Natural killer cell (primary cell): ENCODE measurements at regions of chr21 and their contacts with region 1.

Region 1: GRCh38 chr21:32597205-32597604 is 11.9 kb upstream of the TCP10L start:
- DNase-seq: no peak
- ATAC-seq: no peak
- H3K4me3 ChIP-seq: no peak overlapping the region
- H3K4me3 Mint-ChIP-seq: no peak overlapping the region
- H3K27ac ChIP-seq: no peak overlapping the region
- H3K27ac Mint-ChIP-seq: no peak overlapping the region
- H3K4me1 ChIP-seq: no peaks in the 10 kb centered on the region
- H3K4me1 Mint-ChIP-seq: no peaks in the 10 kb centered on the region
- H3K27me3 ChIP-seq: no peaks in the 10 kb centered on the region
- H3K27me3 Mint-ChIP-seq: no peaks in the 10 kb centered on the region
- CTCF ChIP-seq: no peak

Region 2: GRCh38 chr21:30625449-30626165 is 1971.6 kb before region 1 on chr21:
- intact Hi-C with region 1: no loop called
- DNase-seq: no peak
- ATAC-seq: no peak
- H3K4me3 ChIP-seq: no peak overlapping the region
- H3K4me3 Mint-ChIP-seq: no peak overlapping the region
- H3K27ac ChIP-seq: no peak overlapping the region
- H3K27ac Mint-ChIP-seq: no peak overlapping the region
- H3K4me1 ChIP-seq: no peaks in the 10 kb centered on the region
- H3K4me1 Mint-ChIP-seq: no peaks in the 10 kb centered on the region
- H3K27me3 ChIP-seq: no peaks in the 10 kb centered on the region
- H3K27me3 Mint-ChIP-seq: no peaks in the 10 kb centered on the region
- CTCF ChIP-seq: no peak

Region 3: GRCh38 chr21:32392880-32393676 is 204.1 kb before region 1 on chr21 and contains the start of gene URB1:
- intact Hi-C with region 1: loop called (anchors 2 kb)
- DNase-seq: peak; percentile 94 to 97
- ATAC-seq: peak; percentile 98 to 99 (median 98)
- H3K4me3 ChIP-seq: peak within 1 kb of the TSS; percentile 88
- H3K4me3 Mint-ChIP-seq: peak within 1 kb of the TSS; percentile 84
- H3K27ac ChIP-seq: peak within 1 kb of the TSS; percentile 91
- H3K27ac Mint-ChIP-seq: peak within 1 kb of the TSS; percentile 83 to 86
- H3K4me1 ChIP-seq: peaks cover 17% of the 10 kb centered on the region
- H3K4me1 Mint-ChIP-seq: peaks cover 37 to 38% of the 10 kb centered on the region in 2 donors
- H3K27me3 ChIP-seq: no peaks in the 10 kb centered on the region
- H3K27me3 Mint-ChIP-seq: peaks cover 0 to 7% of the 10 kb centered on the region in 2 donors
- CTCF ChIP-seq: no peak
- total RNA-seq, gene URB1: 6.1 to 7.8 (median 7.5) TPM

Region 4: DNA sequence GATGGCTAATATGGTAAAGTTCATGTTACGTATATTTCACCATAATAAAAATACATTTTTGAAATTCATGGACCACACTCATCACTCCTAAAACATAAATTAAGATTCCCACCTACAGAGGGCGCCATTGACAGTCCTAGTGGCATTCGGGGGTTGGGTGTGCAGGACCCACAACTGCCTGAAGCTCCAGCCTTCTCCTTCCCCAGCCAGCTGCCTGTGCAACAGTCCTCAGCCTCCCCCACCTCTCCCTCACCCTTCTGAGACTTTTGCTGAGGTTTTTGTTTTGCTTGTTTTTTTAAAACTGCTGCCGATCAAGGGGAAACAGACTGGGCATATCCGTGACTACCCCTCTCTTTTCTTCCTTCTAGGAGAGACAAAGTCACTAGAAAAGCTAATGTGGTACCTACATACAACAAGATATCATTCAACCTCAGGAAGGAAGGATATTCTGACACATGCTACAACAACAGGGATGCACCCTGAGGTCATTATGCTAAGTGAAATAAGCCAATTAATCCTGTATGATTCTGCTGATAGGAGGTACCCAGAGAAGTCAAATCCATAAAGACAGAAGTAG is 193.9 kb before region 1 on chr21:
- intact Hi-C with region 1: loop called (anchors 1 kb)
- DNase-seq: peak; percentile 25 to 83
- ATAC-seq: peak; percentile 56 to 74 (median 61)
- H3K4me3 ChIP-seq: no peak overlapping the region
- H3K4me3 Mint-ChIP-seq: no peak overlapping the region
- H3K27ac ChIP-seq: no peak overlapping the region
- H3K27ac Mint-ChIP-seq: no peak overlapping the region
- H3K4me1 ChIP-seq: peaks cover 28% of the 10 kb centered on the region
- H3K4me1 Mint-ChIP-seq: peaks cover 20 to 25% of the 10 kb centered on the region in 2 donors
- H3K27me3 ChIP-seq: no peaks in the 10 kb centered on the region
- H3K27me3 Mint-ChIP-seq: peaks cover 0 to 6% of the 10 kb centered on the region in 2 donors
- CTCF ChIP-seq: peak; percentile 68